Activated CD4-positive, alpha-beta T cell treated with anti-CD3 and anti-CD28 coated beads, Interleukin-2, amount 10 ng/mL, durations not matched to agents 24 days and 14 days (primary cell): ENCODE measurements at regions of chr11 and their contacts with region 1.

Region 1: GRCh38 chr11:72333661-72334060 is 89.7 kb upstream of the PHOX2A start:
- DNase-seq: peak; percentile 91
- H3K4me3 Mint-ChIP-seq: peak overlapping the region; percentile 28
- H3K27ac Mint-ChIP-seq: peak overlapping the region; percentile 68
- H3K4me1 Mint-ChIP-seq: peaks cover 40% of the 10 kb centered on the region
- H3K27me3 Mint-ChIP-seq: no peaks in the 10 kb centered on the region

Region 2: GRCh38 chr11:72352859-72353551 is 19.3 kb after region 1 on chr11:
- intact Hi-C with region 1: loop called (anchors 2 kb)
- DNase-seq: peak; percentile 60
- H3K4me3 Mint-ChIP-seq: no peak overlapping the region
- H3K27ac Mint-ChIP-seq: no peak overlapping the region
- H3K4me1 Mint-ChIP-seq: no peaks in the 10 kb centered on the region
- H3K27me3 Mint-ChIP-seq: no peaks in the 10 kb centered on the region

Region 3: GRCh38 chr11:72413914-72414628 is 80.4 kb after region 1 on chr11:
- intact Hi-C with region 1: loop called (anchors 2 kb)
- DNase-seq: peak; percentile 93
- H3K4me3 Mint-ChIP-seq: no peak overlapping the region
- H3K27ac Mint-ChIP-seq: no peak overlapping the region
- H3K4me1 Mint-ChIP-seq: peaks cover 29% of the 10 kb centered on the region
- H3K27me3 Mint-ChIP-seq: no peaks in the 10 kb centered on the region